ENCODE measurements at regions of chr10 and their contacts with region 1.

Region 1: GRCh38 chr10:59240582-59241183 is 64.2 kb downstream of the PHYHIPL start:
- DNase-seq: no peak
- ATAC-seq: no peak
- H3K4me3 ChIP-seq: no peak overlapping the region
- H3K27ac ChIP-seq: no peak overlapping the region
- H3K4me1 ChIP-seq: no peaks in the 10 kb centered on the region
- H3K27me3 ChIP-seq: no peaks in the 10 kb centered on the region

Region 2: GRCh38 chr10:59362144-59362958 is 121.7 kb after region 1 on chr10 and contains the start of gene FAM13C:
- intact Hi-C with region 1: loop called in 1 of 2 experiments (anchors 5 kb)
- DNase-seq: peak; percentile 58 to 86
- ATAC-seq: peak; percentile 83
- H3K4me3 ChIP-seq: peak within 1 kb of the TSS; percentile 55 to 69
- H3K27ac ChIP-seq: peak within 1 kb of the TSS in 1 of 2 donors; percentile 2
- H3K4me1 ChIP-seq: peaks cover 0 to 3% of the 10 kb centered on the region in 2 donors
- H3K27me3 ChIP-seq: no peaks in the 10 kb centered on the region
- total RNA-seq, gene FAM13C: 8.1 to 49.7 TPM

Region 3: GRCh38 chr10:59465088-59465487 is 224.4 kb after region 1 on chr10:
- intact Hi-C with region 1: loop called (anchors 5 to 10 kb)
- DNase-seq: no peak
- ATAC-seq: no peak
- H3K4me3 ChIP-seq: no peak overlapping the region
- H3K27ac ChIP-seq: no peak overlapping the region
- H3K4me1 ChIP-seq: no peaks in the 10 kb centered on the region
- H3K27me3 ChIP-seq: no peaks in the 10 kb centered on the region

Region 4: DNA sequence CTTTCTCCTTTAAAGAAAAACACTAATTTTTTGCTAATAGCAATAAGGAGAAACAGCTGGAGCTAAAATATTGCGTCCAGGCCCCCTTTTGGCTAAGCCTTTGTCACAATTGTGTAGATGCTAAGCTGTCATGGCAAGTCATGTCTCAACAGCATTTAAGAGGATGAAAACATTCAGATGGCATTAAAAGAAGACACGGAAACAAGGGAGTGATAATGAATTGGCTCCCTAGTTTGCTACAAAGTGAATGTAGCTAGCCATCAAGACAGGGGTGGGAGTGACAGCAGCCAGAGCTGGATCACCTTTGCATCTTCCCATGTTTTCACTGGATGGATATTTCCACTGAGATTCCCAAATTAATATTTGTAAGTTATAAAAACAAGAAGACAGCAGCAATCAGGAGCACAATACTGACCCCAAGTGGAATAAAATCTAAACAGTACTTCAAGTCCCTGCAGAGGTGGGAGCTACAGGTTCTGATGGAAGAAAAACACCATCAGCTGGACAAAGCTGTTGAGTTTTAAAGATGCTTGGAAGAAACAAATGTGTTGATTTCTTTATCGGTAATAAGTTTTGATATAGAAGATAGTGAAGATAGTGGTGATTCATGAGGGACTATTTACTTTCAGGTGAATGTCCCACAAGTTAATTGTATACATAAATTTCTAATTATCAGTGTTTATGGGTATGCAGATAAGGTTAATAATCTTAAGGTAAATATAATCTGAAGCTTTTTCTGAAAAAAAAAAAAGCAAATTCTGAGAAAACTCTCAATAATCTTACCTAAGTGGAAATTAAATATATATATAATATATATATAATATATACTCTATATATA is 339.6 kb after region 1 on chr10:
- intact Hi-C with region 1: loop called (anchors 2 to 5 kb)
- DNase-seq: no peak
- ATAC-seq: no peak
- H3K4me3 ChIP-seq: no peak overlapping the region
- H3K27ac ChIP-seq: no peak overlapping the region
- H3K4me1 ChIP-seq: no peaks in the 10 kb centered on the region
- H3K27me3 ChIP-seq: no peaks in the 10 kb centered on the region

Measured in aorta (tissue), 5 donors.